ENCODE measurements at regions of chr12 and their contacts with region 1.

Region 1: DNA sequence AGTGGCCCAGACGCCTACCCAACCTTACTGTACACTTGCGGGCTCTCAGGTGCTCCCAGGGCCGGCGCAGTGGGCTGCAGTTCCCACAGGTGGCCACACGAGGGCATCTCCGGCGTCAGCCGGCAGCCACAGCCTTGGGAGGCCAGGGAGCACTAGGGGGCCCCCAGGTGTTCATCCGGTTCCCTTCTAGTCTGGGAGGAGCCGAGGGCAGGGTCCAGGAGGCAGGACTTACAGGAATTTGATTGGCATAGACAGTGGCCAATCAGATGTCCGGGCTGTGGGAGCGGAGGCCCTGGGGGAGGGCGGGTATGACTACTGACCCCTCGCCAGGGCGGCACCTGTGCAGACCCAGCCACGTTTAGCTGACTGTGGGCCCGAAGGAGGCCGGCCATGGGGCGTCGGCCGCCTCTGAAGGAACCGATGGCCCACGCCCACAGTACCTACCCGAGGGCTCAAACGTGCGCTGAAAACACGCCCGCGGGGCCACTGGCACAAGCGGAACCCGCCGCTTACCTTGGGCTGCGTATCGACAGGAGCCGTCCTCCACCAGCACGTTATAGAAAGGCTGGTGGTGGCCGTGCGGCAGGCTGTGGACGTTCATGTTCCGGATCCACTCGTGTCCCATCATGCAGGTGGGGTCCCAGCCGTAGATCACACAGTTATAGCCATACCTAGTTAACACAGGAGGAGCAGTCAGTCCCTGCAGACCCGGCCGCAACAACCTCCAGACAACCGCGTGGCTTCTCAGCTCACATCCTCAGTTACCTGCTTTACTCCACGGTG is 34.8 kb downstream of the FBXO21 start:
- DNase-seq: peak; percentile 51
- H3K4me3 ChIP-seq: no peak overlapping the region
- H3K27ac ChIP-seq: no peak overlapping the region
- H3K4me1 ChIP-seq: no peaks in the 10 kb centered on the region
- H3K27me3 ChIP-seq: no peaks in the 10 kb centered on the region
- CTCF ChIP-seq: peak; percentile 82

Region 2: DNA sequence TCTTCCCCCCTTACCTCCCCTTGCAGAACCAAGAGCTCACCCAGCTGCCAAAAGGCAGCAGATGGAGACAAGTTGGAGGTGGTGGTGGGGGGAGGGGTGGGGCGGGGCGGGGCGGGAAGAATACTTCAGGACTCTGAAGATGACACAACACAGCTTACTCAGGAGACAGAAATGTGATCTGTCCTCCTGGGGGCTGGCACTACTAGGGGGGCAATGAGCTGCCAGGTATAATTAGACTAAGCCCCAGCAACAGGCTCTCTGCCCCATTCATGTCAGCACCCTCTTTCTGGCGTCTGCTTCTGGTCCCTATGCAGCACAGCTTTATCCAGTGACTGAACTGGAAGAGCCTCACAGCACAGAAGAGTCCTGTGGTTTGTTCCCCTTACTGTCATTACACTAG is 1285.0 kb before region 1 on chr12:
- CTCF ChIA-PET with region 1: interaction called, 10 read pairs
- POLR2A ChIA-PET with region 1: no interaction called
- intact Hi-C with region 1: no loop called
- DNase-seq: no peak
- H3K4me3 ChIP-seq: no peak overlapping the region
- H3K27ac ChIP-seq: no peak overlapping the region
- H3K4me1 ChIP-seq: no peaks in the 10 kb centered on the region
- H3K27me3 ChIP-seq: no peaks in the 10 kb centered on the region
- CTCF ChIP-seq: no peak

Region 3: GRCh38 chr12:116295327-116296263 is 859.9 kb before region 1 on chr12:
- CTCF ChIA-PET with region 1: no interaction called
- POLR2A ChIA-PET with region 1: no interaction called
- intact Hi-C with region 1: no loop called
- DNase-seq: peak; percentile 28
- H3K4me3 ChIP-seq: no peak overlapping the region
- H3K27ac ChIP-seq: no peak overlapping the region
- H3K4me1 ChIP-seq: peaks cover 10% of the 10 kb centered on the region
- H3K27me3 ChIP-seq: no peaks in the 10 kb centered on the region
- CTCF ChIP-seq: no peak

Measured in A673 (cell line).